ENCODE measurements at regions of chrX and their contacts with region 1.

Region 1: GRCh38 chrX:155056877-155057792 is 13.8 kb downstream of the CMC4 start:
- DNase-seq: peak; percentile 59
- ATAC-seq: peak; percentile 87 to 93

Region 2: GRCh38 chrX:154980330-154981096 is 76.6 kb before region 1 on chrX:
- intact Hi-C with region 1: loop called in 1 of 2 experiments (anchors 5 kb)
- DNase-seq: peak; percentile 53
- ATAC-seq: peak; percentile 86 to 92

Region 3: GRCh38 chrX:154990496-154990895 is 66.6 kb before region 1 on chrX:
- intact Hi-C with region 1: loop called in 1 of 2 experiments (anchors 10 kb)
- DNase-seq: no peak
- ATAC-seq: no peak